ENCODE measurements at regions of chr16 and their contacts with region 1.

Region 1: DNA sequence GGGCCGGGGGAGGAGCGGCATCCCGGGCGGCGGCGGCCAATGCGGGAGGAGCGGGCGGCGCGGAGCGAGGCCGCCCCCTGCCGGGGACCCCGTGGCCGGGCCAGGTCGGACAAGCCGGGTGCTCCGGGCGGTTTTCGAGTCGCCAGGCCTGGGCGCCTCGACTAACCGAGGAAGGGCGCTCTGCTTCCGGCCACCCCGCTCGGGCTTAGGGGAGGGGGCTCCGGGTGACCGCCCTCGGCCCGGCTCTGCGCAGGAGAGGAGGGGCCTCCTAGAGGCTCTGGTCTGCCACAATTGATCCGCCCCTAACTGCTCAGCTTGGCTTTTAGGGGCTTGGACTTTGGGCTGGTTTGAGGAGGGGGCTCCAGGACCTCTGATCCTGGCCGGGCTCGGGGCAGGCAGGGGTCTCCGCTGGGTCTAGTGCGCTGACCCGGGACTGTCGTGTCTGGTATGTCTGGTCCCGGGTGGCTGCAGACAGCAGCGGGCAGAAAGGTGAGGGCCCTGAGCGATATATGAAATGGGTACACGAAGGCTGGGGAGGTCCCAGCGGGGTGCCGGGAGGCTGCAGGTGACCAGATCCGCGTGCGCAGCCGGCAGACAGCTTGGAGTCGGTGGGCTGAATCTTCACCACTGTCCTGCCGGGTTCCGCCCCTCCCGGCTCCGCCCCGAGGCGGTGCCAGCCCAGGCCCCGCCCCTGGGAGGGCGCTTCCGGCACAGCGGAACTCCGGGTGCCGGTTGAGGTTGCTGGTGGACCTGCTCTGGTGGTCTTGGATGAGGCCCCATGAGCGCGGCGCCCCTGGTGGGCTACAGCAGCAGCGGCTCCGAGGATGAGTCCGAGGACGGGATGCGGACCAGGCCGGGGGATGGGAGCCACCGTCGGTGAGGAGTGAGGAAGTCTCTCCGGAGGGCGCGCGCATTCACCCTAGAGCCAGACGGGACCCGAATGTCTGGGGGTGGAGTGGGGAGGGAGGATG is at the start of gene USB1:
- DNase-seq: peak; percentile 92 to 97
- H3K4me3 ChIP-seq: peak within 1 kb of the TSS; percentile 88
- H3K4me3 Mint-ChIP-seq: peak within 1 kb of the TSS; percentile 96
- H3K27ac Mint-ChIP-seq: peak within 1 kb of the TSS; percentile 73
- H3K4me1 ChIP-seq: peaks cover 17% of the 10 kb centered on the region
- H3K4me1 Mint-ChIP-seq: no peaks in the 10 kb centered on the region
- H3K27me3 ChIP-seq: no peaks in the 10 kb centered on the region
- H3K27me3 Mint-ChIP-seq: no peaks in the 10 kb centered on the region
- CTCF ChIP-seq: peak; percentile 76 to 97
- total RNA-seq, gene USB1: 90.5 and 91.2 TPM in 2 replicates

Region 2: GRCh38 chr16:57775661-57776469 is 225.1 kb before region 1 on chr16:
- CTCF ChIA-PET with region 1: no interaction called
- POLR2A ChIA-PET with region 1: no interaction called
- intact Hi-C with region 1: loop called (anchors 5 kb)
- DNase-seq: peak; percentile 70 to 73
- H3K4me3 ChIP-seq: no peak overlapping the region
- H3K4me3 Mint-ChIP-seq: no peak overlapping the region
- H3K27ac Mint-ChIP-seq: peak overlapping the region; percentile 46
- H3K4me1 ChIP-seq: no peaks in the 10 kb centered on the region
- H3K4me1 Mint-ChIP-seq: no peaks in the 10 kb centered on the region
- H3K27me3 ChIP-seq: no peaks in the 10 kb centered on the region
- H3K27me3 Mint-ChIP-seq: no peaks in the 10 kb centered on the region
- CTCF ChIP-seq: peak; percentile 40 to 77

Region 3: DNA sequence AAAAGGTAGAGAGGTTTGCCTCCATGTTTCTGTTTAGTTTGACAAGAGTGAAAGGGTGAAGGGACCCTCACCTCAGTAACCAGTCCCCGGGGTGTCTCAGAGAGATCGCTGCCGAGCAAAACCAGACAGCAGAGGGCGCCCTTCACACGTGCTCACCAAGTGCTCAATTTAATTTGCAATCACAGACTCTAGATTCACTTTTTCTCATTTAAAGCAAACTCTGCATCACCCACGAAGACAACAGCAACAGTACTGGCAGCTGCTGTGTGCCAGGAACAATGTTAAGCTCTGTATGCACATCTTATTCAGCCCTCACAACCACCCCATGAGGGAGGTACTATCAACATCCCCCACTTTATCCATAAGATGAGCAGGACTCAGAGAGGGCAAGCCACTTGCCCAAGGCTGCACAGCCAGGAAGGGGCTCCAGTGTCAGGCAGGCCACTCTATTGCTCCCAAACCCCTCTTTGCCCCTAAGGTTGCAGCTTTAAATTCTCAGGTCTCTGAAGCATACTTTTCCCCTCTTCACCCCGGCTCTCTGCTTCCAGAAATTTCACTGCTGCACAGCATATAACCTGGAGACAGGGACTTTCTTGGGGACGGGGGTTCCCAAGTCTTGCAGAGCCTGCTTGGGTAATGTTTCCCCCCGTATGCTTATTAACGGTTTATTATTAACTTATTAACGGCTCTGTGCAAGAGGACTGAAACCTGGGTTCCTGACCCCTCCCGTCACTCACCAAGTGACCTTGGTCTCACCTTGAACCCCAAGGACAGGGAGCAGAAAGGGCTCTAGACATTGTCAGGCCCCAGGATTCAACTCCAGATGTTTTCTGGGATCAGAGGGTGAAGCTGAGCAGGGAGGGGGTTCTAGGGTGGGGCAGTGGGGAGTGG is 101.0 kb before region 1 on chr16:
- CTCF ChIA-PET with region 1: interaction called, 4 read pairs
- POLR2A ChIA-PET with region 1: no interaction called
- intact Hi-C with region 1: loop called (anchors 1 kb)
- DNase-seq: peak; percentile 83 to 84
- H3K4me3 ChIP-seq: no peak overlapping the region
- H3K4me3 Mint-ChIP-seq: no peak overlapping the region
- H3K27ac Mint-ChIP-seq: no peak overlapping the region
- H3K4me1 ChIP-seq: peaks cover 10% of the 10 kb centered on the region
- H3K4me1 Mint-ChIP-seq: peaks cover 20% of the 10 kb centered on the region
- H3K27me3 ChIP-seq: no peaks in the 10 kb centered on the region
- H3K27me3 Mint-ChIP-seq: no peaks in the 10 kb centered on the region
- CTCF ChIP-seq: peak; percentile 92 to 96

Region 4: DNA sequence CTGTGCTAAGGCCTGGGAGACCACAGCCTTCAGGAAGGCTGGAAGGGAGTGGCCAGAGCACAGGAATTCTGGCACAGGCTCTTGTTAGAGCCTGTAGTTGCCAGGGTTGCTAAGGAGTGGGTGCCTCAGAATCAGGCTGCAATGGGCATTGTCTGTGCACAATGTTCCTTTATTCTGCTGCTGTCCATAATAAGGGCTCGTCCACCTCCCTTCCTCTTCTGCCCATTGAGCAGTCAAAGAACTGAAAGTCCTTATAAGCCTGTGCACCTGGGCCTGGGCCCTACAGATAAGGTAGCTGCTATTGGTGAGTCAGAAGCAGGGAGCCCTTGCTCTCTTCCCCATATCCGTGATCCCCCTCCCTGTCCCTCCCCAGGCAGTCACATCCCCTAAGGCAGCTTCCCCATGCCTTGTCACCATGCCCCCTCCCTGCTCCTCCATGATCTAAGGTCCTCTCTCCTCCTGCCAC is 24.6 kb before region 1 on chr16:
- CTCF ChIA-PET with region 1: no interaction called
- POLR2A ChIA-PET with region 1: no interaction called
- intact Hi-C with region 1: no loop called
- DNase-seq: no peak
- H3K4me3 ChIP-seq: no peak overlapping the region
- H3K4me3 Mint-ChIP-seq: no peak overlapping the region
- H3K27ac Mint-ChIP-seq: no peak overlapping the region
- H3K4me1 ChIP-seq: peaks cover 10% of the 10 kb centered on the region
- H3K4me1 Mint-ChIP-seq: peaks cover 14% of the 10 kb centered on the region
- H3K27me3 ChIP-seq: no peaks in the 10 kb centered on the region
- H3K27me3 Mint-ChIP-seq: no peaks in the 10 kb centered on the region
- CTCF ChIP-seq: no peak

Region 5: DNA sequence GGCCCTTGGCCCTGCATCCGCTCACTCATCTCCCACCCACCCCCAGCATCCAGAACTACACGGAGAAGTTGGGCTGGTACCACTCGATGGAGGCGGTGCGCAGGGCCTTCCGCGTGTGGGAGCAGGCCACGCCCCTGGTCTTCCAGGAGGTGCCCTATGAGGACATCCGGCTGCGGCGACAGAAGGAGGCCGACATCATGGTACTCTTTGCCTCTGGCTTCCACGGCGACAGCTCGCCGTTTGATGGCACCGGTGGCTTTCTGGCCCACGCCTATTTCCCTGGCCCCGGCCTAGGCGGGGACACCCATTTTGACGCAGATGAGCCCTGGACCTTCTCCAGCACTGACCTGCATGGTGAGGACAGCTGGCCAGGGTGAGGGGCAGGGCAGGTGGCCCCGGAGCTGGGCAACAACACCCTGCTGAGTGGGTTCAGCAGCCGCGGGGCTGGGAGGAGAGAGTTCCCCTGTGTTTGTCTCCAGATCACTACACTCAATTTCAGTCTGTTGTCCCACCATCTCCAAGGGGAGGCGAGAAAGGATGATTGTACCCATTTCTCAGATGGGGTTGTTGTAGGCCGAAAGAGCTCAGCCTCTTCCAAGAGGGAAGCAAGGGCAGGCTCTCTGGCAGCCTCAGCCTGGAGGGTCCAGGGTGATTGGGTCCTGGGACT is 39.0 kb after region 1 on chr16:
- CTCF ChIA-PET with region 1: no interaction called
- POLR2A ChIA-PET with region 1: no interaction called
- intact Hi-C with region 1: no loop called
- DNase-seq: no peak
- H3K4me3 ChIP-seq: no peak overlapping the region
- H3K4me3 Mint-ChIP-seq: no peak overlapping the region
- H3K27ac Mint-ChIP-seq: no peak overlapping the region
- H3K4me1 ChIP-seq: no peaks in the 10 kb centered on the region
- H3K4me1 Mint-ChIP-seq: no peaks in the 10 kb centered on the region
- H3K27me3 ChIP-seq: no peaks in the 10 kb centered on the region
- H3K27me3 Mint-ChIP-seq: no peaks in the 10 kb centered on the region
- CTCF ChIP-seq: no peak